Aorta (tissue), 5 donors: ENCODE measurements at regions of chr16 and their contacts with region 1.

Region 1: GRCh38 chr16:67468731-67469130 is 12.2 kb downstream of the ATP6V0D1 start:
- DNase-seq: no peak
- ATAC-seq: no peak
- H3K4me3 ChIP-seq: no peak overlapping the region
- H3K27ac ChIP-seq: no peak overlapping the region
- H3K4me1 ChIP-seq: peaks cover 2% of the 10 kb centered on the region in 2 donors
- H3K27me3 ChIP-seq: no peaks in the 10 kb centered on the region

Region 2: GRCh38 chr16:67428146-67428731 is 40.5 kb before region 1 on chr16:
- intact Hi-C with region 1: loop called (anchors 2 to 5 kb)
- DNase-seq: peak; percentile 79 to 88
- ATAC-seq: peak; percentile 76
- H3K4me3 ChIP-seq: no peak overlapping the region
- H3K27ac ChIP-seq: no peak overlapping the region
- H3K4me1 ChIP-seq: no peaks in the 10 kb centered on the region
- H3K27me3 ChIP-seq: no peaks in the 10 kb centered on the region

Region 3: GRCh38 chr16:67504041-67505021 is 35.6 kb after region 1 on chr16:
- intact Hi-C with region 1: no loop called
- DNase-seq: peak in 1 of 2 donors; percentile 77
- ATAC-seq: no peak
- H3K4me3 ChIP-seq: no peak overlapping the region
- H3K27ac ChIP-seq: no peak overlapping the region
- H3K4me1 ChIP-seq: no peaks in the 10 kb centered on the region
- H3K27me3 ChIP-seq: no peaks in the 10 kb centered on the region

Region 4: DNA sequence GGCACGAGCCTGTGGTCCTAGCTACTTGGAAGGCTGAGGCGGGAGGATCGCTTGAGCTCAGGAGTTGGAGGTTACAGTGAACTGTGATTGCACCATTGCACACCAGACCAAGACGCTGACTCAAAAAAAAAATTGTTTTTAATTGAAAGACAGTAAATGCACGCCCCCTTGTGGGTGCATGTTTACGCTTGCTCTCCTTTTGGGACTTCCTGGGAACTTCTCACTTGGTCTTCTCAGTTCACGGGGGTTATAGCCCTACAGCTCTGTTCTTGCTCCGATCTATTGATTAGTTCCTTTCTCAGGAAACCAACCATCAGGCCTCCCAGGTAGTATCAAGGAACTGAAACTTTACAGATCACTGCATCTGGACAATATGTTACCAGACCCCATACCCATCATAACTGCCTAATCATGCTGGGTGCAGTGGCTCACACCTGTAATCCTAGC is 45.7 kb after region 1 on chr16:
- intact Hi-C with region 1: no loop called
- DNase-seq: peak; percentile 86 to 91
- ATAC-seq: peak; percentile 64
- H3K4me3 ChIP-seq: no peak overlapping the region
- H3K27ac ChIP-seq: no peak overlapping the region
- H3K4me1 ChIP-seq: no peaks in the 10 kb centered on the region
- H3K27me3 ChIP-seq: no peaks in the 10 kb centered on the region